H1 (cell line): ENCODE measurements at regions of chr7 and their contacts with region 1.

Region 1: DNA sequence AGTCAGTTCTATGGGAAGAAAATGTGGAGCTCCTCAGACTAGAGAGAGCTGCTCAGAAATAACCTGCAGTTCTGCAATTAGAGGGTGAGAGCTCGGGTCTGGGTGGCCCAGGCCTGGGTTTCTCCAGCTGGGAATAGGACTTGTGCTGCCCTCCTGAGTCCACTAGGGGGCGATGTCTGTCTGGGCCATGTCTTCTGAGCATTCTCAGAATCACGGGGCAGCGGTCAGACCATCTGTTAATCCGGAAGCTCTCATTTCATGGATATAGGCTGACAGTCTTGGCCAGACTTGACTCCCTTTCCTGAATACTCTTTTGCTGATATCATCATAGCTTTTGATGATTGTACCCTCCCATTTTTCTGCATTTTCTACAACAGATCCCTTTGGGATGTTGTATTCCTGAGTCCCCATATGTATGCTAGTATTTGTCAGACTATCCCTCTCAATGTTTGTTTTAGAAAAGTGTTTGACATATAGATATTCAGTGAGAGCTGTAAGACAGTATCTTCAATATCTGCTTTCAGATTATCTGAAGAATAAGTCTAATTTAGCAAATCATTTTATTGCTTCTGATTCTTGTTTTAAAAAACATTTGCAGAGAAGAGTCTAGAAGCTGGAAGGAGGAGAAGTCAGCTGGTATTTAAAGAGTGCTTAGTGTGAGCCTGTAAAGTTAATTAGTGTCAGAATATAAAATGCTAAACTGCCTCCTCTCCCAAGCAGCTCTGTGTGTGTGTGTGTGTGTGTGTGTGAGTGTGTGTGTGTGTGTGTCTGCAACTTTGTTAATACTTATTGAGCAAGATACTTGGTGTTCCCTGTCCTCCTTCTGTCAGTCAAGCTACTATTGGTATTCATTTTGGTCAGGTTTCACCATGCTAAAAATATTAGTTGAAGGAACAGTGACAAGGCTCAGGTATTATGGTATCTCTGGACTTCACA is 38.0 kb downstream of the STARD3NL start:
- DNase-seq: peak; percentile 47 to 82
- H3K4me3 ChIP-seq: no peak overlapping the region
- H3K27ac ChIP-seq: no peak overlapping the region
- H3K4me1 ChIP-seq: peaks cover 0 to 9% (median 6%) of the 10 kb centered on the region in 4 experiments; a peak in 4 of 7 replicates
- H3K27me3 ChIP-seq: no peaks in the 10 kb centered on the region
- CTCF ChIP-seq: peak; percentile 92 to 97 (median 93)
- EP300 ChIP-seq: no peak
- POLR2A ChIP-seq: no peak
- RAD21 ChIP-seq: peak; percentile 82 to 89

Region 2: DNA sequence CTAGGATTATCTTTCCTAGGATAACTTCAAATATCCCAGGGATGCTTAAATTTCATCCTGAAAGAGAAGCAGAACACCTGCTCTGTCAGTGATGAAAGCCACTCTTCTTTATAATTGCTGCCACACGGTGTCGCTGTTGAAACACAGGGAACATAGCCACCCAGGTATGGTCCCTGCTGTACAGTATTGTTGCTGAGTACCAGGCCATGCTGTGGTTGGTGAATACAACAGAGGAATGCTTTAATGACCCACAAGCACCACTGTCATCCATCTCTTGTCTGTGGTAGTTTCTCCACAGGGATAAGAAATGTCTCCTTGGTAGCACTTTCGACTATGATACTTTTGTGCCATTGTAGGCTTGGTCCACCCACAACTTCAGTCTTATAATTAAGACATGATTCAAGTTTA is 108.5 kb before region 1 on chr7:
- CTCF ChIA-PET with region 1: interaction called, 51 read pairs
- POLR2A ChIA-PET with region 1: no interaction called
- DNase-seq: peak; percentile 7 to 88
- H3K4me3 ChIP-seq: no peak overlapping the region
- H3K27ac ChIP-seq: no peak overlapping the region
- H3K4me1 ChIP-seq: no peaks in the 10 kb centered on the region
- H3K27me3 ChIP-seq: no peaks in the 10 kb centered on the region
- CTCF ChIP-seq: peak; percentile 50 to 91 (median 83)
- EP300 ChIP-seq: no peak
- POLR2A ChIP-seq: no peak
- RAD21 ChIP-seq: peak; percentile 90 to 91

Region 3: DNA sequence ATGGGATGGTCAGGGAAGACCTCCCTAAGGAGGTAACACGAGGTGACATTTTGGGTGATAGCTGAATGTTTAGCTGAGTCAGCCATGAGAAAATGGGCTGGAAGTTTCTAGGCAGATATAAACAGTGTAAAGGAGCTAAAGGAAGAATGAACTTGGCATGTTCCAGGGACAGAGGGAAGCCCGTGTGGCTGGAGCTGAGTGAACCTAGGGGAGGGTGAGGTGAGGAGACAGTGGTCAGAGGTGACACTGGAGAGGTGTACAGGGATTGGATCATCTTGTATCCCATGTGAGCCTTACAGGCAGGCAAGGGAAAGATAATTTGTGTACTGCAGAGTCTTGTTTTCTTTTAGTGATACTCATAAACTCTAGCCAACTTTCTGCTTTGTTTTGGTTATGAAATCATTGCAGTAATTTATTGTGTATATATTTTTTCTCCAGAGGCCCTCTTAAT is 36.2 kb before region 1 on chr7:
- CTCF ChIA-PET with region 1: interaction called, 12 read pairs
- POLR2A ChIA-PET with region 1: interaction called, 4 read pairs
- DNase-seq: no peak
- H3K4me3 ChIP-seq: no peak overlapping the region
- H3K27ac ChIP-seq: no peak overlapping the region
- H3K4me1 ChIP-seq: no peaks in the 10 kb centered on the region; a peak in 1 of 7 replicates
- H3K27me3 ChIP-seq: no peaks in the 10 kb centered on the region
- CTCF ChIP-seq: no peak
- EP300 ChIP-seq: no peak
- POLR2A ChIP-seq: no peak
- RAD21 ChIP-seq: no peak

Region 4: GRCh38 chr7:38229386-38229785 is 13.4 kb after region 1 on chr7:
- CTCF ChIA-PET with region 1: interaction called, 48 read pairs
- POLR2A ChIA-PET with region 1: no interaction called
- DNase-seq: no peak
- H3K4me3 ChIP-seq: no peak overlapping the region
- H3K27ac ChIP-seq: no peak overlapping the region
- H3K4me1 ChIP-seq: peaks cover 0 to 2% (median 0%) of the 10 kb centered on the region in 4 experiments; a peak in 1 of 7 replicates
- H3K27me3 ChIP-seq: no peaks in the 10 kb centered on the region
- CTCF ChIP-seq: no peak
- EP300 ChIP-seq: no peak
- POLR2A ChIP-seq: no peak
- RAD21 ChIP-seq: no peak

Region 5: GRCh38 chr7:38274486-38274885 is 58.5 kb after region 1 on chr7:
- CTCF ChIA-PET with region 1: interaction called, 10 read pairs
- POLR2A ChIA-PET with region 1: no interaction called
- DNase-seq: no peak
- H3K4me3 ChIP-seq: no peak overlapping the region
- H3K27ac ChIP-seq: no peak overlapping the region
- H3K4me1 ChIP-seq: peaks cover 0 to 3% (median under 1%) of the 10 kb centered on the region in 4 experiments; a peak in 2 of 7 replicates
- H3K27me3 ChIP-seq: no peaks in the 10 kb centered on the region
- CTCF ChIP-seq: no peak
- EP300 ChIP-seq: no peak
- POLR2A ChIP-seq: no peak
- RAD21 ChIP-seq: no peak

Region 6: GRCh38 chr7:38335492-38336147 is 119.6 kb after region 1 on chr7:
- CTCF ChIA-PET with region 1: interaction called, 45 read pairs
- POLR2A ChIA-PET with region 1: no interaction called
- DNase-seq: peak; percentile 83 to 91
- H3K4me3 ChIP-seq: no peak overlapping the region
- H3K27ac ChIP-seq: no peak overlapping the region
- H3K4me1 ChIP-seq: peaks cover 0 to 12% (median 7%) of the 10 kb centered on the region in 4 experiments; a peak in 5 of 7 replicates
- H3K27me3 ChIP-seq: no peaks in the 10 kb centered on the region
- CTCF ChIP-seq: peak; percentile 96 to 100 (median 99)
- EP300 ChIP-seq: peak in 1 of 2 experiments; percentile 43; a peak in 1 of 3 replicates
- POLR2A ChIP-seq: peak in 1 of 2 experiments; percentile 34; a peak in 1 of 3 replicates
- RAD21 ChIP-seq: peak; percentile 69 to 83